Psoas muscle (tissue), 8 donors: ENCODE measurements at regions of chr7 and their contacts with region 1.

Region 1: DNA sequence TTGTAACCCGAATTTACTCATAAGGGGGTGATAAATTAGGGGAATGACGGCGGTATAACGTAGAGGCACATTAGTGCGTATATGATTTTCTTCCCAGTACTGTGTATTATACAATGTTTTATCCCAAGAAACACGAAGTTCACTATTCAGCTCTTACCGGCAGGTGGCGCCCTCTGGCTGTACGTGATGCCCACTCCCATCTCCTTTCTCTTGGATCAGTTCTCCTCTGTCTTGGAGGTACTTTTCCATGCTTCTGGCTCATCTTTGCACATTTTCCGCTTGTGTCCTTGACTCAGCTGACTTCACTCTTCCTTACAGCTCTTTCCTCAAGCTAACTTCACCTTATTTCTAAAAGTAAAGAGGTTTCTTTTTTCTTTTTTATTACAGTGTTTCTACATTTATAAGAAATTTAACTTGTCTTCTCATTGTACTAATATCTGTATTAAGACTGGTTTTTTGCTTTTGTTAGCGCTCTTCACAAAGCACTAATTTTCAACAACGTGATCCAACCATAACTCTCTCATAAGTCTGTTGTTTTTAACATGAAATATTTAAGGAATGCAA is 21.3 kb downstream of the TMEM176B start:
- DNase-seq: peak; percentile 77 to 84
- ATAC-seq: peak in 2 of 4 donors; percentile 61 to 70
- H3K4me3 ChIP-seq: no peak overlapping the region
- H3K27ac ChIP-seq: no peak overlapping the region
- H3K4me1 ChIP-seq: no peaks in the 10 kb centered on the region
- H3K27me3 ChIP-seq: peaks cover 0 to 4% (median 0%) of the 10 kb centered on the region in 3 donors
- CTCF ChIP-seq: peak; percentile 77

Region 2: GRCh38 chr7:150876817-150877526 is 98.2 kb after region 1 on chr7:
- intact Hi-C with region 1: loop called in 1 of 2 experiments (anchors 5 kb)
- DNase-seq: no peak
- ATAC-seq: peak in 2 of 4 donors; percentile 44 to 63
- H3K4me3 ChIP-seq: no peak overlapping the region
- H3K27ac ChIP-seq: no peak overlapping the region
- H3K4me1 ChIP-seq: no peaks in the 10 kb centered on the region
- H3K27me3 ChIP-seq: peaks cover 0 to 30% (median 2%) of the 10 kb centered on the region in 3 donors
- CTCF ChIP-seq: peak; percentile 21

Region 3: GRCh38 chr7:150945833-150946420 is 167.1 kb after region 1 on chr7:
- intact Hi-C with region 1: no loop called
- DNase-seq: no peak
- ATAC-seq: no peak
- H3K4me3 ChIP-seq: no peak overlapping the region
- H3K27ac ChIP-seq: no peak overlapping the region
- H3K4me1 ChIP-seq: no peaks in the 10 kb centered on the region
- H3K27me3 ChIP-seq: peaks cover 0 to 5% (median 3%) of the 10 kb centered on the region in 3 donors
- CTCF ChIP-seq: no peak

Region 4: GRCh38 chr7:150962553-150963399 is 184.0 kb after region 1 on chr7:
- intact Hi-C with region 1: no loop called
- DNase-seq: peak in 1 of 2 donors; percentile 31
- ATAC-seq: peak; percentile 77 to 84 (median 80)
- H3K4me3 ChIP-seq: no peak overlapping the region
- H3K27ac ChIP-seq: no peak overlapping the region
- H3K4me1 ChIP-seq: peaks cover 5% of the 10 kb centered on the region
- H3K27me3 ChIP-seq: peaks cover 0 to 16% (median 0%) of the 10 kb centered on the region in 3 donors
- CTCF ChIP-seq: peak; percentile 70